ENCODE measurements at regions of chr10 and their contacts with region 1.

Region 1: GRCh38 chr10:63227207-63227915 is 94.2 kb downstream of the NRBF2 start:
- DNase-seq: peak in 1 of 35 experiments; percentile 50
- ATAC-seq: peak in 1 of 4 experiments; percentile 45
- H3K4me3 ChIP-seq: no peak overlapping the region
- H3K4me3 Mint-ChIP-seq: peak overlapping the region; percentile 26 to 39 (median 28)
- H3K27ac ChIP-seq: peak overlapping the region; percentile 88
- H3K27ac Mint-ChIP-seq: peak overlapping the region; percentile 75 to 88
- H3K4me1 ChIP-seq: peaks cover 27 to 38% of the 10 kb centered on the region in 2 experiments
- H3K4me1 Mint-ChIP-seq: peaks cover 57 to 77% (median 68%) of the 10 kb centered on the region in 3 donors
- H3K27me3 ChIP-seq: no peaks in the 10 kb centered on the region
- H3K27me3 Mint-ChIP-seq: no peaks in the 10 kb centered on the region

Region 2: DNA sequence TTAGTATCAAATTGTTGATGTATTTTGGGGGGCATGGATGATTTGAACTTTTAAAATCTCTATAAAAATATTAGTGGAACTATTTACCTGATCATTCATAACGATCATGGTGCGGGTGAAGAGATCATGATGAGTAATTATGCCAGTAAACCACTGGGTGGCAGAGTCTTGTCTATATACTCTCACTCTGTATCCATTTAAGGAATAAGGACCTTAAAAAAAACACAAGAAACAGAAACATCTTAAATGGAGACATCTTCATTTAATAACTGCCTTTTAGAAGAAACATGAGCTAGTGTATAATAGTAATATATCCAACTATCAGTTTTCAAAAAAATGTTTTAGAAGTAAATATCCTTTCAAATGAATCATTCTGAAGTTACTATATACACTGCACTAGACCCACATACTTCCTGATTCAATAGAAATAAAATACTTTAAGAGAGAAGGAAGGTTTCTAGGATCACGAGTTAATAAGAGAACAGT is 10.2 kb before region 1 on chr10:
- CTCF ChIA-PET with region 1: interaction called, 5 to 22 read pairs
- POLR2A ChIA-PET with region 1: interaction called, 3 to 4 read pairs
- DNase-seq: peak in 8 of 35 experiments; percentile 6 to 73 (median 24)
- ATAC-seq: peak; percentile 77 to 85 (median 80)
- H3K4me3 ChIP-seq: no peak overlapping the region
- H3K4me3 Mint-ChIP-seq: no peak overlapping the region
- H3K27ac ChIP-seq: no peak overlapping the region
- H3K27ac Mint-ChIP-seq: peak overlapping the region; percentile 55 to 73
- H3K4me1 ChIP-seq: peaks cover 6 to 19% of the 10 kb centered on the region in 2 experiments
- H3K4me1 Mint-ChIP-seq: peaks cover 55 to 64% (median 62%) of the 10 kb centered on the region in 3 donors
- H3K27me3 ChIP-seq: no peaks in the 10 kb centered on the region
- H3K27me3 Mint-ChIP-seq: no peaks in the 10 kb centered on the region

Measured in T-cell (primary cell).